Heart left ventricle (tissue), 16 donors: ENCODE measurements at regions of chr21 and their contacts with region 1.

Region 1: DNA sequence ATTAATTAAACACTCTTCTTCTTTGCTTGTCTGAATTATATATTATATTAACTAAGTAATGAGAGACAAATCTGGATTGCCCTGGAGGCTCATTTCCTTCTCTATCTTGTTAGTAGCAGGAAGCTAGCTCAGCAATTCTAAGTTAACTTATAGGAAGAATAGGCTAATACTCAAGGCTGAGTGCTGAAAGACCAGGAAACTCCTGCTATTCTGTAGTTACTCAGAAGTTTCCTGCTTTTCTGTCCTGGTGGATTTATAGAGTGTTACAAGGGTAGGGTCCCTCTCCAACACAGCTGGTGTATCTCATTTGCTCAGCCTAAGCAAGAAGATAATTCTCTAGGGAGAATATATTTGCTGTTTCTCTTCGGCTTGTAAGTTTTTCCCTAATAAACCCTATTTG is 29.2 kb downstream of the HSPA13 start:
- DNase-seq: no peak
- ATAC-seq: no peak
- H3K4me3 ChIP-seq: no peak overlapping the region
- H3K27ac ChIP-seq: no peak overlapping the region
- H3K4me1 ChIP-seq: no peaks in the 10 kb centered on the region
- H3K27me3 ChIP-seq: peaks cover 0 to 3% (median 0%) of the 10 kb centered on the region in 9 donors
- CTCF ChIP-seq: no peak
- POLR2A ChIP-seq: no peak

Region 2: GRCh38 chr21:14285147-14285761 is 68.5 kb before region 1 on chr21:
- intact Hi-C with region 1: loop called in 1 of 10 experiments (anchors 10 kb)
- DNase-seq: no peak
- ATAC-seq: no peak
- H3K4me3 ChIP-seq: no peak overlapping the region
- H3K27ac ChIP-seq: no peak overlapping the region
- H3K4me1 ChIP-seq: peaks cover 0 to 5% (median 0%) of the 10 kb centered on the region in 12 donors
- H3K27me3 ChIP-seq: peaks cover 0 to 8% (median 0%) of the 10 kb centered on the region in 9 donors
- CTCF ChIP-seq: no peak
- POLR2A ChIP-seq: no peak

Region 3: DNA sequence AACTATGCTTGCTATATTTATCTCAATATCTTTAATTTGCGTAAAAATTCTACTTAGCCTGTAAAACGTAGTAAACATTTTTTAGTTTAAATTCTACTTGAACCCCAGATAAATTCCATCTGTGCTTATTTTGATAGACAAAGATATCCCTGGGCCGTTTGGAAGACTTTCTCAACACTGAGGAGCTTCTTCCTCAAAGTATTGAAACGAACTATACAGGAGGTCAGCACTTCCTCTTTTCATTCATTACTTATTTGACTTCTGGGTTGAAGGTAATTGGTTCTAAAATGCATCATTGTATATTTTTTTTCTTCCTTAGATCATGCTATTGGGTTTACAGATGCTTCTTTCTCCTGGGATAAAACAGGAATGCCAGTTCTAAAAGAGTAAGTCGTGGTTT is 45.5 kb before region 1 on chr21:
- intact Hi-C with region 1: no loop called
- DNase-seq: no peak
- ATAC-seq: no peak
- H3K4me3 ChIP-seq: no peak overlapping the region
- H3K27ac ChIP-seq: no peak overlapping the region
- H3K4me1 ChIP-seq: peaks cover 0 to 2% (median 0%) of the 10 kb centered on the region in 12 donors
- H3K27me3 ChIP-seq: no peaks in the 10 kb centered on the region
- CTCF ChIP-seq: no peak
- POLR2A ChIP-seq: no peak

Region 4: DNA sequence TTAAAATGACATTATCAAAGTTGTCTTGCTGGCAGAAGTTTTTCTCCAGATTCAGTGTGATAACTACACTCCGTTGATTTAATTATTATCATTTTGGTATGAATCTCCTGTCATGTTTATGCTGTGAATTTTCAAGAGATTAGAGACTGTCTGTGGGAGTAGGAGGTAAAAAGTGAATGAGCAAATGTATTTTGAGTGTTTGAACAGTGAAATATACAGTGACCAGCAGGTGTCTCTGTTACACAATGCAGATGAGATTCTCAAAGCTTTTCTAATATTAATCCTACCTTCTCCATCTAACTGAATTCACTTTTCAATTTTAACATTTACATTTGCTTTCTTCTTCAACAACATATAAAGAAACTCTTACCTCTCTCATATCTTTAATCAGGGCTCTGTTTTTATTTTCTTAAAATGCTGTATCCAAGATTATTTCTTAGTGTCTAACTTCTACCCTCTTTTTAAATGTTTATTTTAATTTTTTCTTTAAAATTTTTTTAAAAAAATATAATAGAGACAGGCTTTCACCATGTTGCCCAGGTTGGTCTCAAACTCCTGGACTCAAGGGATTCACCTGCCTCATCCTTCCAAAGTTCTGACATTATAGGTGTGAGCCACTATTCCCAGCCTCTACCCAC is 50.1 kb after region 1 on chr21:
- intact Hi-C with region 1: no loop called
- DNase-seq: no peak
- ATAC-seq: no peak
- H3K4me3 ChIP-seq: no peak overlapping the region
- H3K27ac ChIP-seq: no peak overlapping the region
- H3K4me1 ChIP-seq: no peaks in the 10 kb centered on the region
- H3K27me3 ChIP-seq: no peaks in the 10 kb centered on the region
- CTCF ChIP-seq: peak; percentile 29 to 67 (median 52)
- POLR2A ChIP-seq: no peak